ENCODE measurements at regions of chr9 and their contacts with region 1.

Region 1: GRCh38 chr9:133238851-133239532 is 29.9 kb upstream of the OBP2B start:
- DNase-seq: peak; percentile 82
- CTCF ChIP-seq: peak; percentile 52

Region 2: GRCh38 chr9:133257465-133257956 is 18.5 kb after region 1 on chr9:
- CTCF ChIA-PET with region 1: interaction called, 12 read pairs
- POLR2A ChIA-PET with region 1: no interaction called
- DNase-seq: peak; percentile 11
- CTCF ChIP-seq: no peak

Measured in GM10248 (cell line).